IMR-90 (cell line): ENCODE measurements at regions of chr10 and their contacts with region 1.

Region 1: DNA sequence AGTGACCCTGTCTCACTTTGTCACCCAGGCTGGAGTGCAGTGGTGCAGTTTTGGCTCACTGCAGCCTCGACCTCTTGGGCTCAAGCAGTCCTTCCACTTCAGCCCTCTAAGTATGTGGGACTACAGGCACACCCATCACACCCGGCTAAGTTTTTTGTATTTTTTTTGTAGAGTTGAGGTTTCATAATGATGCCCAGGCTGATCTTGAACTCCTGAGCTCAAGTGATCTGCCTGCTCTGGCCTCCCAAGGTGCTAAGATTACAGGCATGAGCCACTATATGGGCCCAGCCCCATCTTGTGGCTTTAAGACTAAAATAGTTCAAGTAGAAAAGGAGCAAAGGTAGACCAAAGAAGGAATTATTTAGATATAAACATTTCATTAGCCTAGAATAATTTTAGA is 65.5 kb downstream of the MLLT10 start:
- DNase-seq: no peak
- ATAC-seq: no peak
- H3K4me3 ChIP-seq: no peak overlapping the region
- H3K27ac ChIP-seq: no peak overlapping the region
- H3K4me1 ChIP-seq: peaks cover 5% of the 10 kb centered on the region
- H3K27me3 ChIP-seq: no peaks in the 10 kb centered on the region
- CTCF ChIP-seq: no peak
- POLR2A ChIP-seq: no peak
- RAD21 ChIP-seq: no peak

Region 2: GRCh38 chr10:21572578-21572977 is 27.0 kb before region 1 on chr10:
- CTCF ChIA-PET with region 1: no interaction called
- POLR2A ChIA-PET with region 1: interaction called, 21 read pairs
- dilution Hi-C with region 1: no loop called
- in situ Hi-C with region 1: no loop called
- intact Hi-C with region 1: no loop called
- DNase-seq: peak; percentile 72
- ATAC-seq: peak; percentile 85
- H3K4me3 ChIP-seq: no peak overlapping the region
- H3K27ac ChIP-seq: no peak overlapping the region
- H3K4me1 ChIP-seq: peaks cover 2% of the 10 kb centered on the region; the same call in 1 of the 2 replicates
- H3K27me3 ChIP-seq: no peaks in the 10 kb centered on the region
- CTCF ChIP-seq: no peak
- POLR2A ChIP-seq: no peak
- RAD21 ChIP-seq: no peak